Right ventricle myocardium inferior (tissue), 1 donor: ENCODE measurements at regions of chr1 and their contacts with region 1.

Region 1: GRCh38 chr1:234661317-234661928 is 51.4 kb upstream of the IRF2BP2 start:
- DNase-seq: no peak
- ATAC-seq: no peak

Region 2: DNA sequence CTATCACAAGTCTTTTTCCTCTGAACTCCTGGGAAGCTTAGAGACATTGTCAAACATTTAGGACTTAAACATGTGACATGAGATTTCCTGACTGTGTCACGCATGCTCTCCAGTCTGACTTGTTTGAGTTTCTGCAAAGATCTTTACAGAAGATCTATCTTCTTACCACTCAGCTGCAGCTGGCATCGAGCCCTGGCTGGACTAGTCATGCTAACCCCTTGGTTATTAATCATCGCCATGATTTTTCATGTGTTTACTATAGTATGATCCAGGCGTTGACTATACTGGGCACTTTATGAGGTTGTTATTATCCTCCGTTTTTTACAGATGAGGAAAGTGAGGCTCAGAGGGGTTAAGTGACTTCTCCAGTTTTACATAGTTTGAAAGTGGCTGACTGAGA is 33.3 kb before region 1 on chr1:
- intact Hi-C with region 1: loop called (anchors 5 kb)
- DNase-seq: no peak
- ATAC-seq: no peak

Region 3: DNA sequence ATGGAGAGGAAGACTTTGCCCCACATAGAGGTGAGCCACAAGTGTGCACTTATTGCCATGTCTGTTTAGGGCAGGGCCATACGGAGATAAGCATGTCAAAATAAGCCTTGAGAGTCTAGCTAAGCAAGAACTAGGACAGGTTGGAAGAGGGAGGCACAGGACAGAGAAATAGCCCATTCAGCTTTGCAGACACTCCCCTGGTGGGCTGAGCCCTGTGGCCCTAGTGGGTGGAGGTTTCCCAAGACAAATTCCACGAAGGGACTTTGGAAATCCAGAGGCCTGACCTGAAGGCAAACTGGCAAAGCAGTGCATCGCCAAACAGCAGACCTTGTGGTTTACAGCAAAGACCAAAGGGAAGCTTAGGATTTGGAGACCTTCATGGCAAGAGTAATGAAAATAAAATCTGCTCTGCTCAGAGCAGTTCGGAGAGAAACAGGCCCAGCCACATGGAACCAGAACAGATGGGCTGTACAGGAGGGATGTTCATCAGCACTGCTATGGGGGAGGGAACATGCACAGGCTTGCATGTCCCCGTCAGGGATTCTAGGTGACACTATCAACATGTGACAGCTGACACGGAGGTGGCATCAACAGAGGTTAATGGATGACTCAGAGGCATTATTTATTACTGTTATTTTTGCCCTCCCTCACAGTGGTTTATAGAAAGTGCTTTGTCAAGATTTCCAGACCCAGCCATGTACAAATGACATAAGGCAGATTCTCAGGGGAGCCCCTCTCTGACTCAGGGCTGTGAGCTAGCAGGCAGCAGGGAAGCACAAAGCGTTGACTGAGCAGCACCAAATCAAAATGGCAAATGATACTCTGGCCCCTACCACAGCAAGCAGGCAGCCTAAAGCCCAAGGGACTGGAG is 38.6 kb after region 1 on chr1:
- intact Hi-C with region 1: no loop called
- DNase-seq: no peak
- ATAC-seq: no peak